ENCODE measurements at regions of chr16 and their contacts with region 1.

Region 1: GRCh38 chr16:58494981-58495520 is 4.9 kb upstream of the NDRG4 start:
- DNase-seq: peak in 1 of 2 experiments; percentile 79
- H3K4me3 ChIP-seq: peak overlapping the region in 2 of 4 experiments; percentile 2 to 21; a peak in 1 of 8 replicates
- H3K27ac ChIP-seq: peak overlapping the region; percentile 82
- H3K4me1 ChIP-seq: peaks cover 0 to 22% (median 13%) of the 10 kb centered on the region in 4 experiments; a peak in 6 of 7 replicates
- H3K27me3 ChIP-seq: peaks cover 0 to 3% (median 1%) of the 10 kb centered on the region in 4 experiments; a peak in 3 of 7 replicates
- CTCF ChIP-seq: peak; percentile 51 to 84 (median 51)
- EP300 ChIP-seq: peak in 1 of 2 experiments; percentile 76; a peak in 1 of 3 replicates
- POLR2A ChIP-seq: no peak
- RAD21 ChIP-seq: peak in 1 of 2 experiments; percentile 33; a peak in 2 of 4 replicates

Region 2: DNA sequence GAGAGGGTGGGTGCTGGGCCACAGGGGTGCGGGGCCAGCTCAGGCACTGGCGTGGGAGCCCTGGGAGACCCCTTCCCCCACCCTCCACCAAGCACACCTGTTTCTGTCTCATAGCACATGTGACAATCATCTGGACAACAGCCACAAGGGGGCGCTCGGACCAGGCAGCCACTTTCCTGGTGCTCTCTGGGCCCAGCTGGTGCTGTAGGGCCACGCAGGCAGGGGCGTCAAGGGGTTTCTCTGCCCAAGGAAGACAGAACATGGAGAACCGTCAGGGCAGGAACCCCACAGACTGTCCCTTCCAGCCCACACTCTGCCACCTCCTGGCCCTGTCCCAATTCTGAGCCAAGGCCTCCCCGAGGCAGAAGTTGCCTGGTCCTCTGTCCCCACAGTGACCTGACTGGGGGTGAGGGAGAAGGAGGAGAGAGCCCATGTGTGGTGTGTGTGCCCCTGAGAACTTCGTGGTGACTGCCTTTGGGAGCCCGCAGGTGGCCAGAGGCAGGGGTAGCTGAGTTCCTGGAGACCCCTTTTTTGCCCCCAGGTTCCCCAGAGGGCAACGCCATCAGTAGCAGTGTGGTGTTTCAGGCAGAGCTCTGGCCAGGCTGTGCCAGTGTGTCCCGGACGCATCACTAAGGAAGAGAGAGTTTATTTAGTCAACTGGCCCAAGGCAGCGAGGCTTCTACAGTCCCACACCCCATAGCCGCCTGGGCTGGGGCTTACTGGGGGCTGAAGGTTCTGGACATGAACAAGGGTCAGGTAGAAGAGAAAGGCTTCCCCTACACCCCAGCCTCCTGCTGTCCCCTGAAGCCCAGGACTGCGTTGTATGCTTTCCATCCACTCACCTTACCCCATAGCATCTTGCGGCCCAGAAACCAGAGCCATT is 17.1 kb after region 1 on chr16:
- CTCF ChIA-PET with region 1: interaction called, 23 read pairs
- POLR2A ChIA-PET with region 1: interaction called, 5 read pairs
- DNase-seq: peak; percentile 62 to 96
- H3K4me3 ChIP-seq: no peak overlapping the region
- H3K27ac ChIP-seq: no peak overlapping the region; the same call in 1 of the 2 replicates
- H3K4me1 ChIP-seq: peaks cover 4 to 15% (median 6%) of the 10 kb centered on the region in 4 experiments
- H3K27me3 ChIP-seq: no peaks in the 10 kb centered on the region
- CTCF ChIP-seq: peak; percentile 89 to 95 (median 91)
- EP300 ChIP-seq: no peak
- POLR2A ChIP-seq: peak in 1 of 2 experiments; percentile 47; a peak in 1 of 3 replicates
- RAD21 ChIP-seq: peak; percentile 59 to 70

Measured in H1 (cell line).